ENCODE measurements at regions of chr12 and their contacts with region 1.

Region 1: DNA sequence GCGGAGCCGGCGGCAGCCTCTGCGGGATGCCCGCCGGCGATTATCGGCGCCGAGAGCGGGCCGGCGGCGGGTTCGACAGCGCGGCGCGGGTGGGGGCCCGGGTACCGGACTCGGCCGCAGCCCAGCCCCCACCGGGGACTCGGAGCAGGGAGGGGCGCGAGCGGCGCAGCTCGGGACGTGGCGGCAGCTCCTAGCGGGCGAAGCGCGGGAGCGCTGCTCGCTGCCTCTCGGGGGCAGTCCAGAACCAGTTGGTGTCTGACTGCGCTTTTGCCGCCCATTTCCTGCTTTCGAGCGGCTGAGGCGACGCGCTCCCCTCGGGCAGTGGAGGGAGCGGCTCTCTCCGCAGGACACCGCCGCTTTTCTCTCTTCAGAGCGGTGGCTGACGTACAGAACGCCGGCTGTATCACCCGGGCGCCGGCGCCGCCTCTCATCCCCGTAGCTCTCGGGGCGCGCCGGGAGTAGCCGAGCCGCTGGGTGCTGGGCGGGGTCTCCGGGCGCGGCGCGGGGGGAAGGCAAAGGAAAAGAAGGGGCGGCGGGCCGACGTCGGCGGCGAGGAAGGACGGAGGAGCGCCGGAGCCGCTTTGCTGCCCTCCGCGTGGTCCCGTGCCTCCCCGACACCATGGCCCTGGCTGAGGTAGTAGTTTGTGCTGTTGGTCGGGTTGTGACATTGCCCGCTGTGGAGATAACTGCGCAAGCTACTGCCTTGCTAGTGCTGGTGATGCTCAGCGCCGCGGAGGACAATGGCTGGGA is 136.6 kb downstream of the MON2 start:
- DNase-seq: peak; percentile 88
- ATAC-seq: peak; percentile 66
- H3K4me3 Mint-ChIP-seq: peak overlapping the region; percentile 94
- H3K27ac Mint-ChIP-seq: peak overlapping the region; percentile 99
- H3K4me1 Mint-ChIP-seq: peaks cover 49% of the 10 kb centered on the region
- H3K27me3 Mint-ChIP-seq: no peaks in the 10 kb centered on the region
- CTCF ChIP-seq: no peak

Region 2: DNA sequence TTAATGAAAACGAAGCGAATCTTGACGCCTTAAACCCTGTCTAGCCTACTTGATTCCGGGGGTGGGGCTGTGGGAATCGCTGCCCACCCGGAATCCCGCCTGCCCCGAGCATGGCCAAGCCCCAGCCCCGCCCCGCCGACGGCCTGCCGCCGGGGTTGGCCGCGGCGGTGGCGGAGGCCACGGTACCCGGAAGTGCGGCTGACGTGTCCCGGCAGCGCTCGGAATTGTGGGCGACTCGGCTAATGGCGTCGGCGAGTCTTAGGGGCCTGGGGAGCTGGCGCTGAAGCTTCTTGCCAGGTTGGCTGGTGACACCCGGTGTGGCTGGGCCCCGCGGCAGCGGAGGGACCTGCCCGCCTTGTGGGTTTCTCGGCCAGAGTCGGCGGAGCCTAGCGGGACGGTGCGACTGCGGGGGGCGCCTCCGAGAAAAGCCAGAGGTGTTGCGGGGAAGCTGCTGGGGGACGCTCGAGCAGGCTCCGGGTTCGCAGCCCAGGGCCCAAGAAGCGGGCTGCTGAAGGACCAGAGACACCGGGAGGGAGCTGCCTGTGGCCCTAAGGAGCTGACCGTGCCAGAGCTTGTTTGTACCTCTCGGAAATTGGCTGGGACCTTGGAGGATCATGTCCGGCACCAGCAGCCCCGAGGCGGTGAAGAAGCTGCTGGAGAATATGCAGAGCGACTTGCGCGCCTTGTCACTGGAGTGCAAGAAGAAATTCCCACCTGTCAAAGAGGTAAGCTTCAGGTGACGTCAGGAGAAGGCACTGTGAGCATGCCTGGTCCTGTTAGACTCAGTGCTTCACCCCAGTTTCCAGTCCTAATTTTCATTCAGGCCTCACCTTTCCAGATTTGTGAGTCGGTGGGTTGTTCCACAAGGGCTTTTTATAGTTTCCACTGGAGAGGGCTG is 136.4 kb before region 1 on chr12 and contains the start of gene MON2:
- CTCF ChIA-PET with region 1: no interaction called
- POLR2A ChIA-PET with region 1: interaction called, 52 read pairs
- intact Hi-C with region 1: loop called (anchors 1 kb)
- DNase-seq: peak; percentile 85
- ATAC-seq: peak; percentile 96
- H3K4me3 Mint-ChIP-seq: peak within 1 kb of the TSS; percentile 84
- H3K27ac Mint-ChIP-seq: peak within 1 kb of the TSS; percentile 84
- H3K4me1 Mint-ChIP-seq: peaks cover 28% of the 10 kb centered on the region
- H3K27me3 Mint-ChIP-seq: no peaks in the 10 kb centered on the region
- CTCF ChIP-seq: no peak
- total RNA-seq, gene MON2: 51.6 and 69.9 TPM in 2 replicates

Region 3: DNA sequence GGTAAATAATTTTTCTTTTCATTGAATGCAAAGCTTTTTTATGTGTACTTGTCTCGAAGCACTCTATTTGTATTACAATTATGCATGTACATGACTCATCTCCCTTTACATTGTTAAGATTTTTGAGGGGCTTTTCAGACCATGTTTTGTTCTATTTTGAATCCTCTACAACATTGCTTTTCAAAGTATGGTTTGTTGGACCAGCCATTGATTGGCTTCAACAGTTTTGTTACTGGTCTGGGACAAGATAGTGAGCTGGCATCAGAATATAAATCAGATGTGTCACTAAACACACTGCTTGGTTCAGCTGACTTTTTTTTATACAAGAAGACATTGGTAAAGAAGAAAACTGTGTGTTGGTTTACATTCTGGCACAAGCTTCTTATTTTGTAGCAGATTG is 14.3 kb before region 1 on chr12:
- CTCF ChIA-PET with region 1: no interaction called
- POLR2A ChIA-PET with region 1: interaction called, 21 read pairs
- intact Hi-C with region 1: no loop called
- DNase-seq: no peak
- ATAC-seq: no peak
- H3K4me3 Mint-ChIP-seq: no peak overlapping the region
- H3K27ac Mint-ChIP-seq: no peak overlapping the region
- H3K4me1 Mint-ChIP-seq: no peaks in the 10 kb centered on the region
- H3K27me3 Mint-ChIP-seq: no peaks in the 10 kb centered on the region
- CTCF ChIP-seq: no peak

Region 4: DNA sequence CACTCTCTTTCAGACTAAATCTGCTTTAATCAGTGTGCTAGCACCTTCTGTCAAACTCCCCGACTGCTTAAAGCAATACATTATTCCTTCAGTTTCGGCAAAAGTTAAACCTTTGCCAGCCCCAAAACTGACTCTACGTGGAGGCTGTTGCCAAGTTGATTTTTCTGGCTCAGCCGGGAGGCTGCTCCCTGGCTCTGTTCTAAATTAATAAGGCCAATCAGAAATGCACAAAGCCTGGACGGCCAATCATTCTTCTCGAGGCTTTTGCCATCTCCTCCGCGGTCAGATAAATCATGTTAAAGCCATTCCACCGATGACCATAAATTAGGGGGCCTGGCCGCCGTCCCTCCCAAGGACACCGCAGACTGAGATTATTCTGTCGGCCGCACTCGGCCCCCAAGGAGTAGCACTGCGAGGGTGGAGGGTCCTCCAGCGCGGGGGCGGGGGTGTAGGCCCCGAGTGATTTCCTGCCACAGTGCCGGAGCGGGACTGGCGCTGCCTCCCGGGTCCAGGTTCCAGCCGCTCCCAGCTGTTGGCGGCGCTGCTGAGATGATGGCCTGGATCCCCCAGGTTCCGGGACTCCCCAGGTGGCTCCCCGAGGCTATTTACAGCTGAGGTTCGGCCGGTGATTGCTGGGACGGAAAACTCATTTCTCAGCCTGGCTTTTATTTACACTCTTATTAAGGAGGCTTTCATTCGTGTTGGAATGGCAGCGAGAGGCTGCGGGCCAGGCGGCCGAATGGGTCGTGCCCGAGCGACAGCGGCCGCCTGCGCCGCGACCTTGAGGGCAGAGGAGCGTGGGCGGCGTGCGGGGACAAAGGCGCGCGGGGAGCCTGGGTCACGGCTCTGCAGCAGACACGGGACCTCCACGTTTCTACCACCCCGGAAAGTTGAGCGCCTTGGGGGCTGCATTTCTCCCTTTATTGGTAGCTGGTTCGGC is 28.5 kb after region 1 on chr12:
- CTCF ChIA-PET with region 1: no interaction called
- POLR2A ChIA-PET with region 1: interaction called, 14 read pairs
- intact Hi-C with region 1: loop called (anchors 1 kb)
- DNase-seq: peak; percentile 30
- ATAC-seq: peak; percentile 64
- H3K4me3 Mint-ChIP-seq: peak overlapping the region; percentile 85
- H3K27ac Mint-ChIP-seq: no peak overlapping the region
- H3K4me1 Mint-ChIP-seq: peaks cover 12% of the 10 kb centered on the region
- H3K27me3 Mint-ChIP-seq: peaks cover 63% of the 10 kb centered on the region
- CTCF ChIP-seq: no peak

Region 5: GRCh38 chr12:62995097-62995496 is 391.9 kb after region 1 on chr12:
- CTCF ChIA-PET with region 1: no interaction called
- POLR2A ChIA-PET with region 1: no interaction called
- intact Hi-C with region 1: no loop called
- DNase-seq: no peak
- ATAC-seq: no peak
- H3K4me3 Mint-ChIP-seq: no peak overlapping the region
- H3K27ac Mint-ChIP-seq: no peak overlapping the region
- H3K4me1 Mint-ChIP-seq: no peaks in the 10 kb centered on the region
- H3K27me3 Mint-ChIP-seq: no peaks in the 10 kb centered on the region
- CTCF ChIP-seq: no peak

Region 6: GRCh38 chr12:63779498-63780481 is 1176.6 kb after region 1 on chr12 and contains the start of gene RXYLT1:
- CTCF ChIA-PET with region 1: no interaction called
- POLR2A ChIA-PET with region 1: no interaction called
- intact Hi-C with region 1: loop called (anchors 5 kb)
- DNase-seq: peak; percentile 82
- ATAC-seq: peak; percentile 93
- H3K4me3 Mint-ChIP-seq: peak within 1 kb of the TSS; percentile 98
- H3K27ac Mint-ChIP-seq: peak within 1 kb of the TSS; percentile 90
- H3K4me1 Mint-ChIP-seq: peaks cover 20% of the 10 kb centered on the region
- H3K27me3 Mint-ChIP-seq: no peaks in the 10 kb centered on the region
- CTCF ChIP-seq: no peak
- total RNA-seq, gene RXYLT1: 16.3 and 22.7 TPM in 2 replicates

Region 7: DNA sequence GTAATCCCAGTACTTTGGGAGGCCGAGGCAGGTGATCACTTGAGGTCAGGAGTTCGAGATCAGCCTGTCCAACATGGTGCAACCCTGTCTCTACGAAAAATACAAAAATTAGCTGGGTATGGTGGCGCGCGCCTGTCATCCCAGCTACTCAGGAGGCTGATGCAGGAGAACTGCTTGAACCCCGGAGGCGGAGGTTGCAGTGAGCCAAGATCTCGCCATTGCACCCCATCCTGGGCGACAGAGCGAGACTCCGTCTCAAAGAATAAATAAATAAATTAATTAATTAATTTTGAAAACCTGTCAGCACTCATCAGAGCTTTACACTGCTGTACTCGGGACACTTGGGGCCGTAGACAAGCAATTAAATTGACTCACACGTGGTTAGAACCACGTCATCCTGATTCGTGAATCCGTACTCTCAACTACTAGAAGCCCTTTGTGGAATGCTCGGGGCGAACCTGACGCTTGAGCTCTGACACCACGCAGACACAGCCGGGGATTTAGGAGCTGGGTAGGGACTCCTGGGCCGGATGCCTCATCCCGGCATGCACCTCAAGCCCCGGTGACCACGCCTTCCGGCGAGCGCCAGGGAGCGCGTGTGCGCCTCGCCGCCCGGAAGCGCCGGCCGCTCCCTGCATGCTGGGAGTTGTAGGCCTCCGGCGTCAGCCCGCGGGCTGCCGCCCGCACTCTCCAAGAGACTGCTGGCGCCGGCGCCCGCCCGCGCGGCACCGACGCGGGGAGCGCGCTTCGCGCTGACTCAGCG is 1800.7 kb after region 1 on chr12 and contains the start of gene XPOT:
- CTCF ChIA-PET with region 1: no interaction called
- POLR2A ChIA-PET with region 1: interaction called, 4 read pairs
- intact Hi-C with region 1: loop called (anchors 5 kb)
- DNase-seq: peak; percentile 88
- ATAC-seq: peak; percentile 91
- H3K4me3 Mint-ChIP-seq: peak within 1 kb of the TSS; percentile 96
- H3K27ac Mint-ChIP-seq: peak within 1 kb of the TSS; percentile 96
- H3K4me1 Mint-ChIP-seq: peaks cover 16% of the 10 kb centered on the region
- H3K27me3 Mint-ChIP-seq: peaks cover 3% of the 10 kb centered on the region
- CTCF ChIP-seq: no peak
- total RNA-seq, gene XPOT: 81.3 and 96.2 TPM in 2 replicates